Psoas muscle (tissue), 8 donors: ENCODE measurements at regions of chr18 and their contacts with region 1.

Region 1: GRCh38 chr18:13530879-13531387 is 195.4 kb downstream of the FAM210A start:
- DNase-seq: peak; percentile 67 to 83
- ATAC-seq: peak; percentile 93 to 95 (median 94)
- H3K4me3 ChIP-seq: no peak overlapping the region
- H3K27ac ChIP-seq: no peak overlapping the region
- H3K4me1 ChIP-seq: peaks cover 8% of the 10 kb centered on the region
- H3K27me3 ChIP-seq: no peaks in the 10 kb centered on the region
- CTCF ChIP-seq: peak; percentile 74

Region 2: GRCh38 chr18:13375302-13376255 is 155.4 kb before region 1 on chr18:
- intact Hi-C with region 1: loop called in 1 of 2 experiments (anchors 5 kb)
- DNase-seq: peak; percentile 79 to 84
- ATAC-seq: peak; percentile 67 to 71 (median 67)
- H3K4me3 ChIP-seq: no peak overlapping the region
- H3K27ac ChIP-seq: peak overlapping the region; percentile 70
- H3K4me1 ChIP-seq: peaks cover 51% of the 10 kb centered on the region
- H3K27me3 ChIP-seq: no peaks in the 10 kb centered on the region
- CTCF ChIP-seq: no peak

Region 3: GRCh38 chr18:13455960-13456471 is 74.9 kb before region 1 on chr18:
- intact Hi-C with region 1: loop called in 1 of 2 experiments (anchors 5 kb)
- DNase-seq: no peak
- ATAC-seq: peak in 3 of 4 donors; percentile 72 to 81 (median 79)
- H3K4me3 ChIP-seq: no peak overlapping the region
- H3K27ac ChIP-seq: no peak overlapping the region
- H3K4me1 ChIP-seq: peaks cover 23% of the 10 kb centered on the region
- H3K27me3 ChIP-seq: no peaks in the 10 kb centered on the region
- CTCF ChIP-seq: no peak